ENCODE measurements at regions of chr18 and their contacts with region 1.

Region 1: DNA sequence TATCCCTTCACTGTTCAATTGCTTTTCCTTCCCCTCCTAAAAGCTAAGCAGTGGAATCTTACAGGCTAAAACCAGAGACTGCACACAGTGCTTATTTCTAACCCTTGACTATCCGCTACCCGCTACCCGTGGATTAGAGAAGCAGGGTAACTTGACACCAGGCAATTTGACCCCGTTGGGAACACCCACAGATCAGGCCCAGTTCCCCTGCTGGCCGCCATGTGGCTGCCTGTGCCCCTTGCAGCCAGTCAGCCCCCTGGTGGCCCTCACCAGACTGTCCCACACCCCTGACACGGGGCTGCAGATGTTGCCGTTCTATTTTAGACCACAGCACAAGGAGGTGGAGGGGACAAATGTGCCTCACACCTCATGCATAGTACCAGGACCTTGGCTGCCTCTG is 74.8 kb downstream of the TXNL1 start:
- DNase-seq: peak; percentile 70

Region 2: GRCh38 chr18:56358608-56359280 is 204.8 kb before region 1 on chr18:
- in situ Hi-C with region 1: loop called (anchors 25 kb)
- DNase-seq: peak; percentile 29

Region 3: GRCh38 chr18:56691530-56691929 is 128.0 kb after region 1 on chr18:
- in situ Hi-C with region 1: no loop called
- DNase-seq: no peak

Measured in KBM-7 (cell line).